K562 (cell line): ENCODE measurements at regions of chr2 and their contacts with region 1.

Region 1: GRCh38 chr2:200306196-200306930 is at the start of gene SPATS2L:
- DNase-seq: peak; percentile 59 to 63 (median 61)
- ATAC-seq: peak; percentile 84
- H3K4me3 ChIP-seq: peak within 1 kb of the TSS; percentile 65
- H3K27ac ChIP-seq: peak within 1 kb of the TSS; percentile 66; the same call in 2 of the 3 replicates
- H3K4me1 ChIP-seq: peaks cover 0 to 8% of the 10 kb centered on the region in 2 experiments; a peak in 3 of 5 replicates
- H3K27me3 ChIP-seq: no peaks in the 10 kb centered on the region
- CTCF ChIP-seq: no peak
- EP300 ChIP-seq: no peak
- POLR2A ChIP-seq: 0 out of 2 replicates have a peak, but pooled peaks have one; percentile 31
- RAD21 ChIP-seq: no peak
- polyA plus RNA-seq, gene SPATS2L: 11.3 to 11.6 TPM

Region 2: GRCh38 chr2:200177971-200178911 is 128.1 kb before region 1 on chr2:
- CTCF ChIA-PET with region 1: no interaction called
- POLR2A ChIA-PET with region 1: interaction called, 3 read pairs
- in situ Hi-C with region 1: no loop called
- intact Hi-C with region 1: loop called (anchors 10 kb)
- DNase-seq: no peak
- ATAC-seq: no peak
- H3K4me3 ChIP-seq: no peak overlapping the region
- H3K27ac ChIP-seq: no peak overlapping the region
- H3K4me1 ChIP-seq: peaks cover 0 to 10% of the 10 kb centered on the region in 2 experiments; a peak in 1 of 5 replicates
- H3K27me3 ChIP-seq: peaks cover 0 to 8% of the 10 kb centered on the region in 2 experiments; a peak in 1 of 5 replicates
- CTCF ChIP-seq: no peak
- EP300 ChIP-seq: no peak
- POLR2A ChIP-seq: no peak
- RAD21 ChIP-seq: no peak

Region 3: DNA sequence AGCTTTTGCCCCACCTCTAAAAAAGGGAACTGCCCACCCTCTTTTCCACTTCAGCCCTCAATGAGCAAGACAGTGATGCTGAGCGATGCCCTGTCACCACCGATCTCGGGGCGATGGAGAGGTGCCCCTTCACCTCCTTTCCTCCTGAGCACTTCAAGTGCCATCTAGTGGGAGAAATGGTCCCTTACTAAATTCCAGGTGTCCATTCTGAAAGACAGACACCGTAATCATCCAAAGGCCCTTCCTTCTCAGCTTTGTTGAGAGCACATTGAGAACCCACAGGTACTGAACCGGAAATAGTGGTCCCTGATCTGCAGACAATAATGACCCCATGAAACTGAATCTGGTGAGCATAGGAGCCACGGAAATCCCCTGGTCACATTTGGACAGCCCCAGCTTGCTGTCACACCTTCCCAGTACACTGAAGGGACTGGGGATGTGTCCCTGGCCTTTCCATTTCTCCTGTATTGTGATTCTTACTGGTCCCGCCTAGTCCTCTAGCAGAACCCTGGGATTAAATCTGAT is 165.0 kb after region 1 on chr2:
- CTCF ChIA-PET with region 1: no interaction called
- POLR2A ChIA-PET with region 1: no interaction called
- in situ Hi-C with region 1: no loop called
- intact Hi-C with region 1: loop called (anchors 5 kb)
- DNase-seq: peak in 2 of 4 experiments; percentile 39
- ATAC-seq: peak; percentile 74
- H3K4me3 ChIP-seq: no peak overlapping the region
- H3K27ac ChIP-seq: no peak overlapping the region
- H3K4me1 ChIP-seq: no peaks in the 10 kb centered on the region
- H3K27me3 ChIP-seq: no peaks in the 10 kb centered on the region
- CTCF ChIP-seq: peak; percentile 35 to 66 (median 60)
- EP300 ChIP-seq: no peak
- POLR2A ChIP-seq: no peak
- RAD21 ChIP-seq: peak; percentile 68 to 75